MCF 10A (cell line): ENCODE measurements at regions of chr11 and their contacts with region 1.

Region 1: DNA sequence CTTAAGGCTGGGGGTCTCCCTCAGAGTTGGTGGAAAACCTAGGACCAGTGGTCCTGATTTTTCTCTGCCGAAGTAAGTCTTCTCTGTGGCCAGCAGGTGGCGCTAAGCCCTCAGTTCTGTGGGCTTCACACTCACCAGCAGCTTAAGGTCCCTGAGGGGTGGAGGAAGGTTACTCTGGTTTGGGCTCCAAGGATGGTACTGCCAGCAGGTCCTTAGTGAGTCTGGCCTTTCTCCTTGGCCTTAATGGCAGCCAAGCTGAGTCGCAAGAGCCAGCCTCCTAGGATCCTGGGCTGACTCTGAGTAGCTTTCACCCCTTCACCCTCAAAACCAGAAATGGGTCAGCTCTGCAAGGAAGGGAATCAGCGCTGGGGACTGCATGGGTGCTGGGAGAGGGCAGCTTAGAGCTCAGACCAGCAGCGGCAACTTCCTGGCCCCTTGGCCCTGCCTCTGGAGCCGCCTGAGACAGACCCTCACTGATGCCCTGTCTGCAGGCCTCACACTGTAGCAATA is 4.4 kb downstream of the KCNJ11 start:
- DNase-seq: peak; percentile 81
- H3K4me3 Mint-ChIP-seq: no peak overlapping the region
- H3K27ac Mint-ChIP-seq: no peak overlapping the region
- H3K4me1 Mint-ChIP-seq: no peaks in the 10 kb centered on the region
- H3K27me3 Mint-ChIP-seq: no peaks in the 10 kb centered on the region
- CTCF ChIP-seq: peak; percentile 90

Region 2: GRCh38 chr11:17221968-17222367 is 162.1 kb before region 1 on chr11:
- CTCF ChIA-PET with region 1: interaction called, 19 read pairs
- POLR2A ChIA-PET with region 1: no interaction called
- intact Hi-C with region 1: no loop called
- DNase-seq: no peak
- H3K4me3 Mint-ChIP-seq: no peak overlapping the region
- H3K27ac Mint-ChIP-seq: no peak overlapping the region
- H3K4me1 Mint-ChIP-seq: peaks cover 7% of the 10 kb centered on the region
- H3K27me3 Mint-ChIP-seq: no peaks in the 10 kb centered on the region
- CTCF ChIP-seq: no peak

Region 3: GRCh38 chr11:17354601-17354991 is 29.5 kb before region 1 on chr11:
- CTCF ChIA-PET with region 1: interaction called, 23 read pairs
- POLR2A ChIA-PET with region 1: interaction called, 10 read pairs
- intact Hi-C with region 1: no loop called
- DNase-seq: peak; percentile 82
- H3K4me3 Mint-ChIP-seq: peak overlapping the region; percentile 75
- H3K27ac Mint-ChIP-seq: peak overlapping the region; percentile 21
- H3K4me1 Mint-ChIP-seq: peaks cover 5% of the 10 kb centered on the region
- H3K27me3 Mint-ChIP-seq: no peaks in the 10 kb centered on the region
- CTCF ChIP-seq: peak; percentile 43

Region 4: DNA sequence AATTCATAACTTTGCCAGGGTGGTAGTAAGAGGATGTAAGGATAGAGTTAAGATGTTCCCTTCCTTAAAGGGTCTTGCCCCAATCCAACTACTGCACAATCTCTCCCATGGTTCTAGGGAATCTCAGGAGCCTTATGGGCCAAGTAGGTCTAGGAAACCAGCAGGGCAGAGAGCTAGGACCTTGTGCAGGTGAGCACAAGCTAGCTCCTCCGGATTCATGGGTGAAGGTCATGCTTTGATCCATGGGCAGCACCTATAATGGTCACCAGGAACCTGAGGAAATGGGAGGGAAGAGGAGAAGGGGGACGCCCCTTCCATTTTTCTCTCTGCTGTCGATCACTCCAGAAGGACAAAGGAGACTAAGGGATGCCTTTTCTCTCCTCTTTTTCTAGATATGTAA is 12.4 kb before region 1 on chr11:
- CTCF ChIA-PET with region 1: interaction called, 47 read pairs
- POLR2A ChIA-PET with region 1: no interaction called
- intact Hi-C with region 1: no loop called
- DNase-seq: peak; percentile 26
- H3K4me3 Mint-ChIP-seq: no peak overlapping the region
- H3K27ac Mint-ChIP-seq: no peak overlapping the region
- H3K4me1 Mint-ChIP-seq: no peaks in the 10 kb centered on the region
- H3K27me3 Mint-ChIP-seq: no peaks in the 10 kb centered on the region
- CTCF ChIP-seq: no peak

Region 5: DNA sequence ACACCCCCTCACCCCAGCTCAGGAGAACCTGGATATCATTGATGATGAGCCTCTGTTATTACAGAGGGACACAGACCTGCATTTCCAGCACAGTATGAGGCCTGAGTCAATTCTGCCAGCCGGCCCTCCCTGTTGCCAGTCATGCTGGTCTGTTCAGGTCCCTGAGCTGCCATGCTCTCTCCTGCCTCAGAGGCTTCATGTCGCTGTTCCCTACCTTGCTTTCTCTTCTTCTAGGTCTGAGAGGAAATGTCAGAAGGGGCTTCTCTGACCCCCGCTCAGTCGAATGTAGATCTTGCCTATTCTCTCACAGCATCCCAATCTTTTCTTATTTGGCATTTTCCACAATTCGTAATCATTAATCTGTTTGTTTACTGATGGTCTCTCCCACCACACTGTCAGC is 114.4 kb after region 1 on chr11:
- CTCF ChIA-PET with region 1: interaction called, 208 read pairs
- POLR2A ChIA-PET with region 1: no interaction called
- intact Hi-C with region 1: no loop called
- DNase-seq: no peak
- H3K4me3 Mint-ChIP-seq: no peak overlapping the region
- H3K27ac Mint-ChIP-seq: no peak overlapping the region
- H3K4me1 Mint-ChIP-seq: no peaks in the 10 kb centered on the region
- H3K27me3 Mint-ChIP-seq: peaks cover 33% of the 10 kb centered on the region
- CTCF ChIP-seq: no peak

Region 6: DNA sequence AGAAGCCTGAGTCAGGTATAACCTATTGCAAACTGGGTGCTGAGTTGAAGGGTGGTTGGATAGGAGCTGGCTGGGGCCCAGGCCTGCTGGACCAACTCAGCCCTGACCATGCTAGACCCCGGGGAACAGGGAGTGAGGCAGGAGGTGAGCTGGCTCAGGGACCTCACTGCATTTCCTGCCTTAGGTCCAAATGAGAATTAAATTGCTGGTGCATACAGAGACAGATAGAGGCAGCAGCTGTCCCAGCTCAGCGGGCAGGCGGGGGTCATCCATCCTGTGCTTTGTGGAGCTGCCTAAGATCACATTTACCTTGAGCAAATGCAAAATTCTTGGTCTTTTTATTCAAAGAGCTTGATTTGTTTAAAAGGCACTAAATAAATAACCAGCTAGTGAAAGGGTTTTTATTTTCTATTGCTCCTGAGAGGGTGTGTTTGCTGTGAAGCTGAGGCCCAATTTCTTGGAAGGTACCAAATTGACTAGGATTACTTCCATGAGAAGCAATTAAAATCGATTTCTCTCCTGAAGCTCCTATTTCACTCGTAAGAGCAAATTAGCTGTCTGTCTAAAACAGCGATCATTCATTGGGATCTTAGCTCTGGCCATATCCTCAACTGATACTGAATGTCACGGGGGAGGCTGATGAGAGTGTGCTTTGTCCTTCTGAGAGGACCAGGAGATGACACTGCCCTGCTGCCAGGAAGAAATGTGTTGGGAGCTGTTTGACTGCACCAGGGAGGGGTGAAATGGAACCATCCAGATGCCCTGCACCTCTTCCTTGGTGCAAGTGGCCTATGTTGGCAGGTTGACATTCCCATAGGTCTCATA is 135.2 kb after region 1 on chr11:
- CTCF ChIA-PET with region 1: interaction called, 208 read pairs
- POLR2A ChIA-PET with region 1: no interaction called
- intact Hi-C with region 1: no loop called
- DNase-seq: no peak
- H3K4me3 Mint-ChIP-seq: no peak overlapping the region
- H3K27ac Mint-ChIP-seq: peak overlapping the region; percentile 47
- H3K4me1 Mint-ChIP-seq: no peaks in the 10 kb centered on the region
- H3K27me3 Mint-ChIP-seq: peaks cover 25% of the 10 kb centered on the region
- CTCF ChIP-seq: no peak